Thyroid gland (tissue), 4 donors: ENCODE measurements at regions of chr20 and their contacts with region 1.

Region 1: GRCh38 chr20:49186535-49187329 is 1.4 kb downstream of the STAU1 start:
- DNase-seq: peak; percentile 71 to 72
- H3K4me3 ChIP-seq: peak overlapping the region; percentile 63 to 82 (median 74)
- H3K27ac ChIP-seq: peak overlapping the region; percentile 81 to 95 (median 88)
- H3K4me1 ChIP-seq: peaks cover 40 to 43% of the 10 kb centered on the region in 2 donors
- H3K27me3 ChIP-seq: no peaks in the 10 kb centered on the region
- CTCF ChIP-seq: no peak
- POLR2A ChIP-seq: peak; percentile 2 to 74

Region 2: GRCh38 chr20:49132995-49133478 is 53.7 kb before region 1 on chr20:
- intact Hi-C with region 1: loop called (anchors 5 kb)
- DNase-seq: peak in 1 of 2 donors; percentile 22
- H3K4me3 ChIP-seq: no peak overlapping the region
- H3K27ac ChIP-seq: peak overlapping the region; percentile 22 to 61 (median 52)
- H3K4me1 ChIP-seq: peaks cover 6 to 8% of the 10 kb centered on the region in 2 donors
- H3K27me3 ChIP-seq: no peaks in the 10 kb centered on the region
- CTCF ChIP-seq: peak; percentile 8 to 83 (median 61)
- POLR2A ChIP-seq: no peak

Region 3: DNA sequence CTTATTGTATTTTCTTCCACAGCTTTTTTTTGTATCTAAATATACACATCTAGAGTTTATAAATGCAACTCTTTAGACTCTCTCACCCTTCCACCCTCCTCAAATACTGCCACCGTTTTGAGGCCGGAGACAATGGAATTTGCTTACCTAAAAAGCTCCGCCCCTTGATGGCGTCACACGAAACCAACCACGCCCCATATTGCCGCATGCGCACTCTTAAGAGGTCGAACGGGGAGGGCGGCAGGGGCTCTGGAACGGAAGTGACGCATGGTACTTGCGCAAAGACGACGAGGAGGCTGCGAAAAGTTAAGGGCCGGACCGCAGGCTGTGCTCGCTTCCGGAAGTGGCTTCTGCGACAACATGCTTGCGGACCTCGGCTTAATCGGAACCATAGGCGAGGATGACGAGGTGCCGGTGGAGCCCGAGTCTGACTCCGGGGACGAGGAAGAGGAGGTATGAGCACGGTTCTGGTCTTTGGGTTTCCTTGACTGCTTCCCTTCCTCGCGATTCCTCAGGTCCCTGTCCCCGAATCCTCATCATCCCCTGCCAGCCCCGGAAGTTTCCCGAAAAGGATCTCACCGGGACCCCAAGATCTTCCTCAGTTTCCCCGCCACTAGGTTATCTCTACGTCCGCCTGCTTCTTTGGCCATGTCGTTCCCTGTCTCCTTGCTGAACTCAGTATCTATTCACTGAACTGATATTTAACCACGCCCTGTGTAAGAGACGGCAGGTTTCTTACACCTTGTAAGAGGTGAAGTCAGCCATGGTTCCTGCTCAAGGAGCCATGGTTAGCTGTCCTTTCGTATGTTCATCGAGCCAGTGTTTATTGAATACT is 32.6 kb after region 1 on chr20 and contains the start of gene DDX27:
- intact Hi-C with region 1: loop called (anchors 2 kb)
- DNase-seq: peak; percentile 96 to 97
- H3K4me3 ChIP-seq: peak within 1 kb of the TSS; percentile 37 to 74 (median 52)
- H3K27ac ChIP-seq: peak within 1 kb of the TSS; percentile 44 to 89 (median 83)
- H3K4me1 ChIP-seq: peaks cover 13 to 18% of the 10 kb centered on the region in 2 donors
- H3K27me3 ChIP-seq: no peaks in the 10 kb centered on the region
- CTCF ChIP-seq: no peak
- POLR2A ChIP-seq: peak in 1 of 2 donors; percentile 91
- total RNA-seq, gene DDX27: 30.4 to 45.8 (median 38.2) TPM

Region 4: GRCh38 chr20:49278036-49278817 is 91.5 kb after region 1 on chr20 and contains the start of gene ZNFX1:
- intact Hi-C with region 1: loop called (anchors 5 kb)
- DNase-seq: peak; percentile 99
- H3K4me3 ChIP-seq: peak within 1 kb of the TSS; percentile 65 to 88 (median 86)
- H3K27ac ChIP-seq: peak within 1 kb of the TSS; percentile 94 to 99 (median 98)
- H3K4me1 ChIP-seq: peaks cover 31 to 40% of the 10 kb centered on the region in 2 donors
- H3K27me3 ChIP-seq: no peaks in the 10 kb centered on the region
- CTCF ChIP-seq: no peak
- POLR2A ChIP-seq: peak; percentile 97 to 99
- total RNA-seq, gene ZNFX1: 39.8 to 52.2 (median 46.3) TPM